SK-N-SH (cell line): ENCODE measurements at regions of chr17 and their contacts with region 1.

Region 1: DNA sequence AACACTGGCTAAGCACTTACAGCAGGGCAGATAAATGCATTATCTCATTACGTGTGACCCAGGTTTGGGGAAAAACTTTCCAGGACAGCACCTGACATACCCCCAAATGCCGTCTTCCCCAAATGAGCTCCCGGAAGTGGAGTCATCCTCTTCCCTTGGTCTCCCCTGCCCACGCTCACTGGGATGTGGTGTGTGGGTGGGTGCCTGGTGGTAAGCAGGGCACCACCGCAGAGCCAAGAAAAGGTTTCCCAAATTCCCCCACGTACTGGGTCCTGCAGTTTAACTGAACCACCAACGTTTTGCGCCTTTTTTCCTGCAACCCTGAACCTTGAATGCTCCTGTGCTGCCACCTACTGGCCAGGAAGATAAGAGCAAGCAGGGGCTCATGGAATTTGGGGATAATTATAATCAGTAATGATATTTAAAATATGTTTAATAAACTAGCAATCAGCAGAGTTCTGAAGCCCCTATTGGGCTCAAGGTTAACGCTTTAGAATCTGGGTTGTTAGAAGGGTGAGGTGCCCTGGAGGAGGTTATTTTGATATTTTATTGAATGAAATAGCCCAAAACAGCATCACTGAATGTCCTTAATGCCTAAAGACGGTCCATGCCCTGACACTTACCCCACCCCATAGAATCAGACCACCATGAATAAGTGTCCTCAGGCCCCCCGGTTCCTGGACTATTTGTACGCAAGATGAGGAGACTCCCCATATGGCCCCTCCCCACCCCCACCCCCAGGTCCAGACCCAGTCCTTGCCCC is 8.0 kb downstream of the SPPL2C start:
- DNase-seq: peak; percentile 84
- H3K4me3 ChIP-seq: no peak overlapping the region; a peak in 1 of 4 replicates
- H3K27ac ChIP-seq: no peak overlapping the region
- H3K4me1 ChIP-seq: peaks cover 0 to 15% of the 10 kb centered on the region in 2 experiments; a peak in 1 of 4 replicates
- H3K27me3 ChIP-seq: peaks cover 6% of the 10 kb centered on the region; the same call in 1 of the 2 replicates
- CTCF ChIP-seq: peak; percentile 100
- EP300 ChIP-seq: no peak
- RAD21 ChIP-seq: peak; percentile 97

Region 2: GRCh38 chr17:45640141-45640850 is 212.4 kb before region 1 on chr17:
- CTCF ChIA-PET with region 1: interaction called, 58 read pairs
- POLR2A ChIA-PET with region 1: interaction called, 4 read pairs
- DNase-seq: peak; percentile 82
- H3K4me3 ChIP-seq: no peak overlapping the region; a peak in 1 of 4 replicates
- H3K27ac ChIP-seq: no peak overlapping the region
- H3K4me1 ChIP-seq: no peaks in the 10 kb centered on the region
- H3K27me3 ChIP-seq: no peaks in the 10 kb centered on the region
- CTCF ChIP-seq: peak; percentile 98
- EP300 ChIP-seq: no peak
- RAD21 ChIP-seq: peak; percentile 95

Region 3: GRCh38 chr17:45719335-45720071 is 133.2 kb before region 1 on chr17:
- CTCF ChIA-PET with region 1: interaction called, 26 read pairs
- POLR2A ChIA-PET with region 1: no interaction called
- DNase-seq: no peak
- H3K4me3 ChIP-seq: no peak overlapping the region
- H3K27ac ChIP-seq: no peak overlapping the region
- H3K4me1 ChIP-seq: no peaks in the 10 kb centered on the region
- H3K27me3 ChIP-seq: no peaks in the 10 kb centered on the region; the same call in 1 of the 2 replicates
- CTCF ChIP-seq: peak; percentile 54
- EP300 ChIP-seq: no peak
- RAD21 ChIP-seq: no peak

Region 4: GRCh38 chr17:45841883-45842525 is 10.7 kb before region 1 on chr17:
- CTCF ChIA-PET with region 1: interaction called, 327 read pairs
- POLR2A ChIA-PET with region 1: interaction called, 4 read pairs
- DNase-seq: no peak
- H3K4me3 ChIP-seq: no peak overlapping the region
- H3K27ac ChIP-seq: no peak overlapping the region
- H3K4me1 ChIP-seq: peaks cover 0 to 7% of the 10 kb centered on the region in 2 experiments; a peak in 1 of 4 replicates
- H3K27me3 ChIP-seq: peaks cover 17% of the 10 kb centered on the region
- CTCF ChIP-seq: no peak
- EP300 ChIP-seq: no peak
- RAD21 ChIP-seq: no peak

Region 5: DNA sequence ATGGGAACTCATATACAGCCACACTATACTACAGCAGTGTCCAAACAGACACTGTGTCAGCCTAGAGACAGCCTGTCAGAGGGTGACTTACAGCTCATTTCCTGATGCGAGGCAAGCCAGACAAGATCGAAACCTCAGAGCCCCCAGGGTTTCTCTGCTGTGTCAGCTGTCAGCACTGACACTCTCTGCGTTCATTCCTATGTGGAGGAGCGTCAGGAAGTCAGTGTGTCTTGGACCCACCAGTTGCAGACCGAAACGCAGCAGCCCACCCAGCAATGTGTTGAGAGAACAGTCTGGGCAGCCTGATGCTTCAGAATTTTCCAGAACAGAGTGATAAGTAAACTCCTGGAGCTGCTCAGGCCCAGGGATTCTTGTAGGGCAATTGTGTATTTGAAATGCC is 21.0 kb after region 1 on chr17:
- CTCF ChIA-PET with region 1: interaction called, 87 read pairs
- POLR2A ChIA-PET with region 1: no interaction called
- DNase-seq: peak; percentile 63
- H3K4me3 ChIP-seq: no peak overlapping the region
- H3K27ac ChIP-seq: no peak overlapping the region
- H3K4me1 ChIP-seq: peaks cover 0 to 6% of the 10 kb centered on the region in 2 experiments; a peak in 2 of 4 replicates
- H3K27me3 ChIP-seq: peaks cover 51% of the 10 kb centered on the region
- CTCF ChIP-seq: no peak
- EP300 ChIP-seq: 0 out of 4 replicates have a peak, but pooled peaks of 1 of the 2 experiments have one; percentile 18
- RAD21 ChIP-seq: no peak

Region 6: GRCh38 chr17:45914047-45914717 is 61.5 kb after region 1 on chr17:
- CTCF ChIA-PET with region 1: no interaction called
- POLR2A ChIA-PET with region 1: no interaction called
- DNase-seq: no peak
- H3K4me3 ChIP-seq: no peak overlapping the region
- H3K27ac ChIP-seq: no peak overlapping the region
- H3K4me1 ChIP-seq: peaks cover 0 to 11% of the 10 kb centered on the region in 2 experiments; a peak in 1 of 4 replicates
- H3K27me3 ChIP-seq: peaks cover 12% of the 10 kb centered on the region; the same call in 1 of the 2 replicates
- CTCF ChIP-seq: no peak
- EP300 ChIP-seq: no peak
- RAD21 ChIP-seq: no peak